ENCODE measurements at regions of chrX and their contacts with region 1.

Region 1: GRCh38 chrX:148049441-148049840 is 68.3 kb downstream of the FMR1NB start:
- DNase-seq: no peak
- H3K4me3 ChIP-seq: no peak overlapping the region
- H3K27ac ChIP-seq: no peak overlapping the region
- H3K4me1 ChIP-seq: no peaks in the 10 kb centered on the region
- H3K27me3 ChIP-seq: no peaks in the 10 kb centered on the region
- CTCF ChIP-seq: peak; percentile 18 to 51 (median 34)
- EP300 ChIP-seq: no peak
- POLR2A ChIP-seq: no peak

Region 2: DNA sequence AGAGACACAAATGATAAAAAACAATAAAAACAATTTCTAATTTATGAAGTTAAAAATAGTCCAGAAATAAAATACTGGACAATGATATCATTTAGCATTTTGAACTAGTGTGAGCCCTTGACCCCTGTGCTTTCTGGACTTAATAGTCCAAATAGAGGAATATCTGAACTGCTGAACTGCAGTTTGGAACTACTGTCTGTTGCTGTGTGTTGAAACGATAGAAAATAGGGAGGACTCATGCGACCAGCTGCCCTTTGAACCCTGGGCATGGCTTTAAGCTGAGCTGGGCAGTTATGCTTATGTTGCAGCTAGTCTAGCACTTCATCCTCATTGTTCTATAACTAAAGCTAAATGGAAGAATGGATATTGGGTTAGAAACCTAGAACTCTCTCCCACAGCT is 31.2 kb after region 1 on chrX:
- in situ Hi-C with region 1: no loop called
- intact Hi-C with region 1: no loop called
- DNase-seq: no peak
- H3K4me3 ChIP-seq: no peak overlapping the region
- H3K27ac ChIP-seq: no peak overlapping the region
- H3K4me1 ChIP-seq: no peaks in the 10 kb centered on the region
- H3K27me3 ChIP-seq: no peaks in the 10 kb centered on the region
- CTCF ChIP-seq: no peak
- EP300 ChIP-seq: no peak
- POLR2A ChIP-seq: no peak

Region 3: GRCh38 chrX:149286940-149287349 is 1237.5 kb after region 1 on chrX:
- in situ Hi-C with region 1: loop called in 1 of 4 experiments (anchors 25 kb)
- intact Hi-C with region 1: no loop called
- DNase-seq: peak; percentile 19
- H3K4me3 ChIP-seq: no peak overlapping the region
- H3K27ac ChIP-seq: no peak overlapping the region
- H3K4me1 ChIP-seq: no peaks in the 10 kb centered on the region
- H3K27me3 ChIP-seq: no peaks in the 10 kb centered on the region
- CTCF ChIP-seq: peak; percentile 19 to 56 (median 41)
- EP300 ChIP-seq: no peak
- POLR2A ChIP-seq: no peak

Region 4: GRCh38 chrX:149470955-149471354 is 1421.5 kb after region 1 on chrX:
- in situ Hi-C with region 1: loop called in 1 of 4 experiments (anchors 25 kb)
- intact Hi-C with region 1: no loop called
- DNase-seq: peak; percentile 73
- H3K4me3 ChIP-seq: no peak overlapping the region
- H3K27ac ChIP-seq: no peak overlapping the region
- H3K4me1 ChIP-seq: no peaks in the 10 kb centered on the region
- H3K27me3 ChIP-seq: no peaks in the 10 kb centered on the region
- CTCF ChIP-seq: peak; percentile 60 to 87 (median 76)
- EP300 ChIP-seq: no peak
- POLR2A ChIP-seq: no peak